ENCODE measurements at regions of chr2 and their contacts with region 1.

Region 1: GRCh38 chr2:229380176-229380575 is 109.1 kb upstream of the PID1 start:
- DNase-seq: no peak
- H3K4me3 ChIP-seq: no peak overlapping the region
- CTCF ChIP-seq: no peak
- POLR2A ChIP-seq: no peak

Region 2: DNA sequence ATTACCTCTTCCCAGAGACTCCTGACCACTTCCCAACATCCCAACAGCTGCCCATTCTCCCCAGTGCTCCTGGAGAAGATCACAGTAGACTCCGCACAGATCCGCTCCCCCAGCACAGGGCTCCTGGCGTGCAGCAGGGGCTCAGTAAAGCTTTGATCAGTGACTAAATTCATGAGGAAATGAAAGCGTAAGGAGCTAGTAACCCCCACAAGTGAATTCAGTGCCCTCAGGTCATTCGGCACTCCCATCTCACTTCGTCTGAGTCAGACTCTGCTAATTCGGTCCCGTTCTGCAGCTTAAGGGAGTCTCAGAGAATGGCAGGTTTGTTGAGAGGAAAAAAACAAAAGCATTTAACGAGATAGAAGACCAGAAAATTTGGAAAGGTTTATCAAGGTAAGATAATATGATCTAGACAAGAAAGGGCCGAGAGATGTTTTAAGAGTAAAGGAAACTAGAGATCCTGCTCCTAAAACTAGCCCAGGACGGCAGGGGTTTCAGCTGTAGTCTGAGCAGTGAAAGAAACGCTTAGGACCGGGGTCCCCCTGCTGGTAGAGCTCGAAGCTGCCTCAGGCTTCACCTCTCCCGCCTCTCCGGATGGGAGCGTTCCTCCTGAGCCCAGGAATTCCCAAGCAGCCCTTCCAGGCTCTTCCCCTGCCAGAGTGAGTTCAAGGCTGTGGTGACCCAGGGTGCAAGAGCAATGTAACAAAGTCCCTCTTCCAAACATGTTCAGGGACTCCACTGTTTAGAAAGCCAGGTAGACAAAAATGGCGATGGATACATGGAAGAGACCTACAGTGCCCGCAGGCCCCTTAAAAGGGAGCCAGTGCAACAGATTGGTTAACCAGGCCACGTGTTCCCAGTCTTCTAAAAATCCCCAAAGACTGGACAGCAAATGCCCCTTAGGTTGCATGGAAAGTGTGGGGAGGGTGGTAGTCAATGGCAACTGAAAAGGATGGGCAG is 206.8 kb after region 1 on chr2:
- intact Hi-C with region 1: no loop called
- DNase-seq: peak; percentile 79 to 95
- H3K4me3 ChIP-seq: no peak overlapping the region
- CTCF ChIP-seq: peak in 1 of 3 donors; percentile 37
- POLR2A ChIP-seq: no peak

Region 3: DNA sequence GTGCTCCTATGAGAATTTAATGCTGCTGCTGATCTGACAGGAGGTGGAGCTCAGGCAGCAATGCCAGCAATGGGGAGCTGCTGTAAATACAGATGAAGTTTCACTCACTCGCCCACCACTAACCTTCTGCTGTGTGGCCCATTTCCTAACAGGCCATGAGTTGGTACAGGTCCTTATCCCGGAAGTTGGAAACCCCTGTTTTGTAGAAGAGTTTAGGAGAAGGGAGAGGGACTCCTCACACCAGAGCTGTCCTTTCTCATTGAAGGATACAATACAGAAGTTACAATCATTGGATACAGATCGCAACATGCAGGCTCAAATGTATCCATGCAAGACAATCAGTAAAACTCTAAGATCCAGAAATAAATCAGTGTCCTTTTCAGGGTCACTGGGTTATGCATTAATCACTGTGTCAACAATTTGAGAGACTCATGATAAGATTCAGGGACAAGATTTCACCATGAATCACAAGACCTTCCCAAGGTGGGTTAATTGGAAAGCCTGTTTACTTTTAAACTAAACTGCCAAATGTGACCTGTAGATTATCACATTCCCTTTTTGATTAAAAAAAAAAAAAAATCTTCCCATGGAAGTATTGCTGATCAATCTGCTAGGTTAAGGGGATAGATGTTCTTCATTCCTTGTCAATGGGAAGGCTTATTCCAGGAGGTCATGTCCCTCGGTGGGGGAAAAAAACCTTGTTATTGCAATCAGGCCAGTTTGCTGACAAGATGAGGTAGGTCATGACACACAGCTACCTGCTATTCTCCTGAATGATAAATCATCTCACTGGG is 1133.0 kb after region 1 on chr2:
- intact Hi-C with region 1: loop called (anchors 5 kb)
- DNase-seq: no peak
- H3K4me3 ChIP-seq: no peak overlapping the region
- CTCF ChIP-seq: no peak
- POLR2A ChIP-seq: no peak

Measured in lower leg skin (tissue), 4 donors.